ENCODE measurements at regions of chr9 and their contacts with region 1.

Region 1: GRCh38 chr9:18331808-18332209 is 142.1 kb upstream of the ADAMTSL1 start:
- DNase-seq: no peak
- H3K4me3 ChIP-seq: no peak overlapping the region
- H3K27ac ChIP-seq: no peak overlapping the region
- H3K4me1 ChIP-seq: peaks cover 0 to 12% (median 4%) of the 10 kb centered on the region in 4 donors
- H3K27me3 ChIP-seq: no peaks in the 10 kb centered on the region
- CTCF ChIP-seq: no peak

Region 2: GRCh38 chr9:16744394-16744793 is 1587.4 kb before region 1 on chr9:
- intact Hi-C with region 1: loop called (anchors 10 kb)
- DNase-seq: no peak
- H3K4me3 ChIP-seq: no peak overlapping the region
- H3K27ac ChIP-seq: no peak overlapping the region
- H3K4me1 ChIP-seq: no peaks in the 10 kb centered on the region
- H3K27me3 ChIP-seq: no peaks in the 10 kb centered on the region
- CTCF ChIP-seq: no peak